Aorta (tissue), 5 donors: ENCODE measurements at regions of chr20 and their contacts with region 1.

Region 1: GRCh38 chr20:48657475-48658470 is 170.0 kb downstream of the PREX1 start:
- DNase-seq: peak in 1 of 2 donors; percentile 77
- ATAC-seq: peak; percentile 87
- H3K4me3 ChIP-seq: no peak overlapping the region
- H3K27ac ChIP-seq: no peak overlapping the region
- H3K4me1 ChIP-seq: peaks cover 0 to 7% of the 10 kb centered on the region in 2 donors
- H3K27me3 ChIP-seq: no peaks in the 10 kb centered on the region

Region 2: GRCh38 chr20:48697879-48698724 is 40.3 kb after region 1 on chr20:
- intact Hi-C with region 1: loop called in 1 of 2 experiments (anchors 5 kb)
- DNase-seq: peak; percentile 90 to 93
- ATAC-seq: peak; percentile 82
- H3K4me3 ChIP-seq: no peak overlapping the region
- H3K27ac ChIP-seq: peak overlapping the region; percentile 51 to 98
- H3K4me1 ChIP-seq: peaks cover 0 to 3% of the 10 kb centered on the region in 2 donors
- H3K27me3 ChIP-seq: no peaks in the 10 kb centered on the region

Region 3: GRCh38 chr20:48708617-48709016 is 50.8 kb after region 1 on chr20:
- intact Hi-C with region 1: no loop called
- DNase-seq: peak; percentile 23 to 34
- ATAC-seq: no peak
- H3K4me3 ChIP-seq: no peak overlapping the region
- H3K27ac ChIP-seq: no peak overlapping the region
- H3K4me1 ChIP-seq: peaks cover 9 to 14% of the 10 kb centered on the region in 2 donors
- H3K27me3 ChIP-seq: no peaks in the 10 kb centered on the region

Region 4: GRCh38 chr20:48828022-48828743 is 170.4 kb after region 1 on chr20:
- intact Hi-C with region 1: loop called (anchors 2 to 5 kb)
- DNase-seq: peak; percentile 91 to 94
- ATAC-seq: peak; percentile 86
- H3K4me3 ChIP-seq: peak overlapping the region; percentile 94 to 97
- H3K27ac ChIP-seq: peak overlapping the region in 1 of 2 donors; percentile 9
- H3K4me1 ChIP-seq: peaks cover 4% of the 10 kb centered on the region in 2 donors
- H3K27me3 ChIP-seq: no peaks in the 10 kb centered on the region

Region 5: DNA sequence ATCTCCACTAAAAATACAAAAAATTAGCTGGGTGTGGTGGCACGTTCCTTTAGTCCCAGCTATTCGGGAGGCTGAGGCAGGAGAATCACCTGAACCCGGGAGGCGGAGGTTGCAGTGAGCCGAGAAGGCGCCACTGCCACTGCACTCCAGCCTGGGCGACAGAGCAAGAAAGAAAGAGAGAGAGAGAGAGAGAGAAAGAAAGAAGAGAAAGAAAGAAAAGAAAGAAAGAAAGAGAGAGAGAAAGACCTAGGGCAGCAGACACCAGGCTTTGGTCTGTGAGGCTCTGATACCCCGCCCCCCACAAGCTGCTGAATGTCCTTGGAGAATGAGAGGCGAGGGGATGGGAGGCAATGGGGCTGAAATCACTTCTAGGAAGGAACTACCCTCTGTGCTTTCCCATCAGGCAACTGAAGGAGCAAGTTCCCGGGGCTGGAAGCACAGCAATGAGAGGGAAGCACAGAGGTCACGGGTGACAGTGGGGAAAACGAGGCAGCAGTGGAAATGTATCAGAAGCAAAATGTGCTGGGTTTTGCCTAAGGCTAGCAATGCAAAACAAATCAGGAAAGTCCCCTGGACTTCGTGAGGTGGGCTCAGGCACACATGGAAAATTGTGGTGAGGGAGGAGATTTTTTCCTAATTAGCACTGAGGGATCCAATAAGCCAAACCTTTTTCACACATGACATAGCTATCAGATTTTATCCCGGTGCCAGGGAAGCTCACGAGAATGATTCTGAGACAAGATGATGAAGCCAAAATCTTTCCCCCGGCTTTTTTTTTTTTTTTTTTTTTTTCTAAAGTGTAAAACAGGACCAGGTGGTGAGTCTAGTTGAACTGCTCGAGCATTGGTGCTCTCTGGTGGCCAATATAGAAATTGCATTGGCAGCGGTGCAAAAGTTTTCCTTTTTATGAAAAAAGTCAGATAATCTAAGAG is 246.9 kb after region 1 on chr20:
- intact Hi-C with region 1: loop called (anchors 1 kb)
- DNase-seq: no peak
- ATAC-seq: peak; percentile 77
- H3K4me3 ChIP-seq: no peak overlapping the region
- H3K27ac ChIP-seq: no peak overlapping the region
- H3K4me1 ChIP-seq: no peaks in the 10 kb centered on the region
- H3K27me3 ChIP-seq: no peaks in the 10 kb centered on the region